Head of caudate nucleus (tissue), 42 donors: ENCODE measurements at regions of chr16 and their contacts with region 1.

Region 1: DNA sequence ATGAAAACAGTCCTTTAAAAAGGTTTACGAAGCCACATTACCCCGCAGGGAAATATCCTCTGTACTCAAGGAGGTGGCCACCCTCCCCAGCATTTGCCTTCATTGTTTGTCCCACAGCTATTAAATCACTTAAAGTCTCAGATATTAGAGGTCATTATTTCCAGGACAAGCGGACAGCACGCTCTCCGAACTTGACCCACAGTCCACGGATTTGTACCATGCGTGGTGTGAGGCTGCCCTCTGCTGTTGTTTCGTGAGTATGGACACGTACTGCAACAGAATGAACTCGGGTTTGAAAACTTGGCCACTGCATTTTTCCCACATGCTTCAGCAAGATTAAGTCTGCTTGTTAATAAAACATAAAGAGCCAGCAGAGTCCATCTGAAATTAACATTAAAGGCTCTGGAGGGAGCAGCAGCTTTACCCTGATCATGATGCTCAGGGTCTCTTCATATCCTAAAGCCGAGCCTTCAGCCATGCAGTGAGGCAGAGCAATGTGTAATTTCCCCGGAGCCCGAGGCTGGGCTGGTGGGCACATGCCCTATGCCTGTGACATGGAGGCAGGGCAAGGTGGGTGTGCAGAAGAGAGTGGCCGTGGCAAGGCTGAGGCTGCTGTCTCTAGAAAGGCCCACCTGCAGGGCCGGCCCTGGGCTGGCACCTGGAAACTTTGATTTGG is 19.7 kb downstream of the MEAK7 start:
- DNase-seq: peak; percentile 42 to 92 (median 83)

Region 2: GRCh38 chr16:83971165-83972130 is 513.3 kb before region 1 on chr16:
- intact Hi-C with region 1: loop called (anchors 10 kb)
- DNase-seq: peak in 11 of 42 donors; percentile 34 to 76 (median 52)

Region 3: DNA sequence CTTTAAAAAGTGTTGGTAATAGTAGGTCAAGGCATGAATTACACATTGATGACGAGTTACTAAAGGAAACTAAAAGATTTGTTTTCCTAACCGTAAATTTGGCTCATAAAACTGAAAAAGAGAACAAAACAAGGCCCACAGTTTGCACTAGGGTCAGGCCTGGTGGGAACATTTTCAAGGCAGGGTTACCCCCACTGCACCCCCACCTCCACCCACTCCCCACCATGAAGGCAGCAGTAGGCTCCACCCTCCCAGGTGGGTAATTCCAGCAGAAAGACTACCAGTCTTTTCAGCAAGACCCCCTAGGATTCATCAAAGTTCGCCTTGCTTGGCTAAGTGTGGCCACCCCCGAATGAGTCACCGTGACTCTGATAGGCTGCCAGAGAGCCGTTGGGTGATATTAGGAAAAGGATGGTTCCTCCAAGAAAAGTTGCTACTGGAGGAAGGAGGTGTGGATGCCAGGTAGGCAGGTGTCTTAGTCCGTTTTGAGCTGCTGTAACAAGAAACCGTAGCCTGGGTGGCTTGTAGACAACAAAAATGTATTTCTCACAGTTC is 331.0 kb before region 1 on chr16:
- intact Hi-C with region 1: no loop called
- DNase-seq: no peak

Region 4: GRCh38 chr16:84183911-84184591 is 300.7 kb before region 1 on chr16:
- intact Hi-C with region 1: loop called (anchors 5 kb)
- DNase-seq: peak in 1 of 42 donors; percentile 39

Region 5: DNA sequence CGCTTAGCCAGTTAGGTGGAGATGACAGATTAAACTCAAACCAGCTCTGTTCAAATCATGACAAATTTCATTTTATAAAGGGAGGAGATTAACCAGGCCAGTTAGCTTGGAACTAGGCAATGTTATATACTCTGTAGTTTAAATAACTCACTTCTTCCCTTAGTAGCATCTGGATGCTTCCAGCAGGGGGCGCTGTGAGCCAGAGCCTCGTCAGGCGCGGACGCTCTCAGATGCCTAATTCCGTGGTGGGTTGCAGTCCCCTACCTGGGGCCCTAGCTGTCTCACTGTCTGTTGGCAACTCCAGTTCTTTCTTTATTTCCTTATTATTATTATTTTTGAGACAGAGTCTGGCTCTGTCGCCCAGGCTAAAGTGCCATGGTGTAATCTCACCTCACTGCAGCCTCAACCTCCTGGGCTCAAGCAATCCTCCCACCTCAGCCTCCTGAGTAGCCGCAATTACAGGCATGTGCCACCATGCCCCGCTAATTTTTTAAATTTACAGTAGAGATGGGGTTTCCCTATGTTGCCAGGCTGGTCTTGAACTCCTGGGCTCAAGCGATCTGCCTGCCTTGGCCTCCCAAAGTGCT is 207.4 kb before region 1 on chr16:
- intact Hi-C with region 1: loop called (anchors 2 kb)
- DNase-seq: peak; percentile 42 to 96 (median 84)

Region 6: GRCh38 chr16:84434800-84435199 is 49.9 kb before region 1 on chr16:
- intact Hi-C with region 1: loop called (anchors 10 kb)
- DNase-seq: no peak